ENCODE measurements at regions of chr17 and their contacts with region 1.

Region 1: GRCh38 chr17:68457539-68458259 is 403 bp upstream of the WIPI1 start:
- DNase-seq: peak; percentile 97
- ATAC-seq: peak; percentile 98
- H3K4me3 Mint-ChIP-seq: peak overlapping the region; percentile 84
- H3K27ac Mint-ChIP-seq: peak overlapping the region; percentile 78
- H3K4me1 Mint-ChIP-seq: peaks cover 21% of the 10 kb centered on the region
- H3K27me3 Mint-ChIP-seq: no peaks in the 10 kb centered on the region
- CTCF ChIP-seq: no peak

Region 2: DNA sequence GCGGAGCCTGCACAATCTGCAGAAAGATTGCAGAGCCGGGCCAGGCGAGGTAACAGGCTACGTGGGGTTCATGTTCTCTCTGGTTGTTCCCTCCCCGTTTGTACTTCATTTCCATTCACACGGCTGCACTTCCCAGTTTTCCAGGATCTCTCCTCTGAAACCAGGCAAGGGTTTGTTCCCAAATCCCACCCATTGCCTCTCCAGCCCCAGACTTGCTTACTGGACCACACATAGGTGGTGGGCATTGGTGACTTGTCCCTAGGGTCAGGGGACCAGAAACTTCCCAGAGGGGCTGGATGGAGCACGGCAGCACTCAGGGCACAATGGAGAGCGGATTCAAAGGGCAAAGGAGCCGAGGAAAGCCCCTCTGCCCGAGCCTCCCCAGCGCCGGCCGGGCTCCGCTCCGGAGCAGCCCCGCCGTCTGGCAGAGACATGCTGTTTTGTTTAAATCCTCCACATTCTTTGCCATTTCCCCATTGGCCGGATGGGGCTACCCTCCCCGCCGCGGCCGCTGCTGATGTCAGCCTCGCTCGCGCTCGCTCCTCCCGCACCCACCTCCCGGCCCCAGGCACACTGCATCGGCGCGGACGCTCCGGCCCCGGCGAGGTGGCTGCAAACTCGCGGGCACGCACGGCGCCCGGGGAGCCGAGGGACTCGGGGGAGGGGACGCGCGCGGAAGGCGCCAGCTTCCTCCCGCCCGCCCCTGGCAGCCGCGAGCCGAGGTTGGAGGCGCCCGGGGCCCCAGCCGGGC is 1080.8 kb before region 1 on chr17 and contains the start of gene PITPNC1:
- CTCF ChIA-PET with region 1: no interaction called
- POLR2A ChIA-PET with region 1: no interaction called
- intact Hi-C with region 1: loop called (anchors 5 kb)
- DNase-seq: peak; percentile 77
- ATAC-seq: peak; percentile 74
- H3K4me3 Mint-ChIP-seq: peak within 1 kb of the TSS; percentile 87
- H3K27ac Mint-ChIP-seq: peak within 1 kb of the TSS; percentile 71
- H3K4me1 Mint-ChIP-seq: peaks cover 26% of the 10 kb centered on the region
- H3K27me3 Mint-ChIP-seq: no peaks in the 10 kb centered on the region
- CTCF ChIP-seq: no peak
- total RNA-seq, gene PITPNC1: 15.2 and 19.3 TPM in 2 replicates

Region 3: DNA sequence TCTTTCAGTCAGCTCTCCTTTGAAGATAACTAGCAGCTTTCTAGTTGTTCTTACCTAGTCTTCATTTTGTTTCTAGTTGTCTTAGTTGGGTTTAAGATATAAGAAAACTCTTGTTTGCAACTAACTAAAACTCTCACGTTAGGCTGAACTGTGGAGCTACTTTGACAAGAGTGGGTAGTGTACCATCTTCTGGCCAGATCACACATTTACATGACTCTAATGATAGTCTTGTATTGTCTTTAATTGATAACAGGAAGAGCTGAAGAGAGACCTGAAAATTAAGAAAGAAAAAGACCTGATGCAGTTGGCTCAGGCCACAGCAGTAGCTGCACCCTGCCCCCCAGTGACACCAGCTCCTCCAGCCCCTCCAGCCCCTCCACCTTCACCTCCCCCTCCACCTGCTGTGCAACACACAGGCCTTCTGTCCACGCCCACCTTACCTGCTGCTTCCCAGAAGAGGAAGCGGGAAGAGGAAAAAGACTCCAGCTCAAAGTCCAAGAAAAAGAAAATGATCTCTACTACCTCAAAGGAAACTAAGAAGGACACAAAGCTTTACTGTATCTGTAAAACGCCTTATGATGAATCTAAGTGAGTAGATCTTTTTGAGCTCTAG is 498.3 kb before region 1 on chr17:
- CTCF ChIA-PET with region 1: interaction called, 10 read pairs
- POLR2A ChIA-PET with region 1: no interaction called
- intact Hi-C with region 1: no loop called
- DNase-seq: no peak
- ATAC-seq: no peak
- H3K4me3 Mint-ChIP-seq: no peak overlapping the region
- H3K27ac Mint-ChIP-seq: no peak overlapping the region
- H3K4me1 Mint-ChIP-seq: peaks cover 3% of the 10 kb centered on the region
- H3K27me3 Mint-ChIP-seq: no peaks in the 10 kb centered on the region
- CTCF ChIP-seq: no peak

Region 4: DNA sequence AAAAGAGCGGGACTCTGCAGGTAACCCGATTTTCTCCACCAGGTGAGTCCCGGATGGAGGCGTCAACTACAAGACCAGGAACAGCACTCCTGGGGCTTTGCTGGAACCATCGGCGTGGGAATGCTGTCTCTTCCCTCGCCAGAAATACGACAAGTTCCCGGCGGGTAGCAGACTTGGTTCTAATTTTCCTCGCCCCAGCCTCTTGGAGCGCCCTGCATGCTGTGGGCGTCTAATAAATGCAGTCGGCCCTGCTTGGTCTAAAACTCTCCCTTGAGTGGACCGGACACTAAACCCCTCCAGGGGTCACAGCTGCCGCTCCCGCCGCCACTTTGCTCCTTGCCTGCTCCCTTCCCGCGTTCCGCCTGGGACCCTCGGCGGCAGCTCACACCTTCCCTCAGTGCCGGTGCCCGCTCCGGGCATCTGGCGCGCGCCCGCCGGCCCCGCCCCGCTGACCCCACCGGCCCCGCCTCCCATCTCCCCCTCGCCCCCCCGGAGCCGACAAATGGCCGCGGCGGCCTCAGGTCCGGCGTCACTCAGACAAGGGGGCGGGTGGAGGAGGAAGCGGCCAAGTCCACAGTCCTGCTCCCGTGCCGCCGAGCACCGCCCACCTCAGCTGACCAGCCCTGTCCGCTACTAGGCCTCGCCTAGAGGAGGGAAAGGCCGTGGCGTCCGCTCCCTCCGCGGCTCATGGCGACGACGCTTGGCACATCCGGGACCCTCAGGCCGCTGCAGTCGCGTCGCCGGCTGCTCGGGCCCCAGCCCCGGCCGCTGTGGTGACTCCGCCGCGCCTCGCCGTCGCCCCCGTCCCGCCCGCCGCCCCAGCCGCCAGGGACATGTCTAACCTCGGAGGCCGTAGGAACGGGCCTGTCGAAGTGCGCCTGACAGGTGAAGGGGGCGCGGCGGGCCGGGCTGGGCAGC is 356.4 kb before region 1 on chr17:
- CTCF ChIA-PET with region 1: no interaction called
- POLR2A ChIA-PET with region 1: interaction called, 5 read pairs
- intact Hi-C with region 1: loop called (anchors 5 kb)
- DNase-seq: peak; percentile 75
- ATAC-seq: peak; percentile 86
- H3K4me3 Mint-ChIP-seq: peak overlapping the region; percentile 93
- H3K27ac Mint-ChIP-seq: peak overlapping the region; percentile 85
- H3K4me1 Mint-ChIP-seq: peaks cover 31% of the 10 kb centered on the region
- H3K27me3 Mint-ChIP-seq: no peaks in the 10 kb centered on the region
- CTCF ChIP-seq: no peak

Region 5: GRCh38 chr17:68238164-68238872 is 219.4 kb before region 1 on chr17:
- CTCF ChIA-PET with region 1: no interaction called
- POLR2A ChIA-PET with region 1: interaction called, 7 read pairs
- intact Hi-C with region 1: loop called (anchors 2 kb)
- DNase-seq: no peak
- ATAC-seq: no peak
- H3K4me3 Mint-ChIP-seq: peak overlapping the region; percentile 79
- H3K27ac Mint-ChIP-seq: peak overlapping the region; percentile 99
- H3K4me1 Mint-ChIP-seq: peaks cover 72% of the 10 kb centered on the region
- H3K27me3 Mint-ChIP-seq: no peaks in the 10 kb centered on the region
- CTCF ChIP-seq: no peak

Region 6: GRCh38 chr17:68441064-68441770 is 16.5 kb before region 1 on chr17:
- CTCF ChIA-PET with region 1: interaction called, 21 read pairs
- POLR2A ChIA-PET with region 1: interaction called, 22 read pairs
- intact Hi-C with region 1: loop called (anchors 1 kb)
- DNase-seq: no peak
- ATAC-seq: no peak
- H3K4me3 Mint-ChIP-seq: no peak overlapping the region
- H3K27ac Mint-ChIP-seq: peak overlapping the region; percentile 76
- H3K4me1 Mint-ChIP-seq: peaks cover 50% of the 10 kb centered on the region
- H3K27me3 Mint-ChIP-seq: no peaks in the 10 kb centered on the region
- CTCF ChIP-seq: no peak